Naive thymus-derived CD4-positive, alpha-beta T cell (primary cell): ENCODE measurements at regions of chr17 and their contacts with region 1.

Region 1: GRCh38 chr17:64145757-64146417 is 15.9 kb upstream of the ERN1 start:
- DNase-seq: peak; percentile 85 to 99 (median 96)
- ATAC-seq: peak; percentile 98
- H3K4me3 ChIP-seq: peak overlapping the region; percentile 72
- H3K4me3 Mint-ChIP-seq: no peak overlapping the region
- H3K27ac ChIP-seq: peak overlapping the region; percentile 91
- H3K27ac Mint-ChIP-seq: no peak overlapping the region
- H3K4me1 ChIP-seq: peaks cover 11 to 12% of the 10 kb centered on the region in 2 donors
- H3K4me1 Mint-ChIP-seq: peaks cover 11 to 34% (median 27%) of the 10 kb centered on the region in 7 donors
- H3K27me3 ChIP-seq: no peaks in the 10 kb centered on the region
- H3K27me3 Mint-ChIP-seq: no peaks in the 10 kb centered on the region

Region 2: DNA sequence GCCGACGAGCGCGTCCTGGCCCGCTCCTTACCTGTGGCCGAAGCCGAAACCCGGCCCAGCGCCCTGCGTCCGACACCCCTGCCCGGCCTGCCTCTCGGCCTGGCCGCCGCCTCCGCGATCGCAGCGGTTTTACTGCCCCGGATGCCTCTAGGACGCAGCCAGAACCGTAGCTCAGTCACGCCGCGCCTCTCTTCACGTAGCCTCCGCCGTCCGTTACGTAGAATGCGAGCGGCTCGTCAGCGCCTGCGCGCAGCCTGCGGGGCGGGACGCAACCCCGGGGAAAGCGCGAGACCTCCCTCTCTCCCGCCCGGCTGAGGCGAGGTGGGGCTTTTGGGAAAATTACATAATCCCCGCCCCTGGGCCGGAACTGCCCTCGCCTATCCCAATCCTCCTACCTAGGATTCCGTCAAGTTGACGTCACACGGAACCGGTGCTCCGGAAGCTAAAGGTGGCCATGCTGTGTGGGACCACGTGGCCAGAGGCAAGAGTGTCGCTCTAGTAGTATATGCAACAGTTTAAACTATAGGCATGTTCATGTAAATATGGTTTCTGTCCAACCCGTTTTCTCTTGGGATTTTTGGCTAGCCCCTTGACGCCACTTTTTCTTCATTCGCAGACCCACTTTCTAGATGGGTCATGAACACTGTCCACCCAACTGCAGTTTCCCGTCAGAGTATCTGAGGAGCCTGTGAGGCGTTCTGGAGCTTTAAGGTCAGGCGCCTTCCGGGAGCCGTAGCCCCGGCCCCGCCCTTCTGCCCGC is 372.3 kb before region 1 on chr17 and contains the start of gene CCDC47:
- CTCF ChIA-PET with region 1: no interaction called
- POLR2A ChIA-PET with region 1: no interaction called
- intact Hi-C with region 1: loop called in 1 of 2 experiments (anchors 1 kb)
- DNase-seq: peak; percentile 92 to 99 (median 99)
- ATAC-seq: peak; percentile 88
- H3K4me3 ChIP-seq: peak within 1 kb of the TSS; percentile 85
- H3K4me3 Mint-ChIP-seq: peak within 1 kb of the TSS; percentile 91 to 99 (median 98)
- H3K27ac ChIP-seq: peak within 1 kb of the TSS; percentile 100
- H3K27ac Mint-ChIP-seq: peak within 1 kb of the TSS; percentile 97 to 100 (median 99)
- H3K4me1 ChIP-seq: peaks cover 21 to 46% of the 10 kb centered on the region in 2 donors
- H3K4me1 Mint-ChIP-seq: peaks cover 31 to 84% (median 62%) of the 10 kb centered on the region in 7 donors
- H3K27me3 ChIP-seq: no peaks in the 10 kb centered on the region
- H3K27me3 Mint-ChIP-seq: peaks cover 0 to 7% (median 0%) of the 10 kb centered on the region in 5 donors
- total RNA-seq, gene CCDC47: 31.8 to 62.9 (median 34.7) TPM

Region 3: GRCh38 chr17:64020056-64020766 is 125.7 kb before region 1 on chr17 and contains the start of gene ICAM2:
- CTCF ChIA-PET with region 1: interaction called, 6 read pairs
- POLR2A ChIA-PET with region 1: interaction called, 84 read pairs
- intact Hi-C with region 1: loop called in 1 of 2 experiments (anchors 1 kb)
- DNase-seq: peak; percentile 73 to 97 (median 96)
- ATAC-seq: peak; percentile 90
- H3K4me3 ChIP-seq: peak within 1 kb of the TSS; percentile 94
- H3K4me3 Mint-ChIP-seq: peak within 1 kb of the TSS; percentile 91 to 100 (median 98)
- H3K27ac ChIP-seq: peak within 1 kb of the TSS; percentile 96
- H3K27ac Mint-ChIP-seq: peak within 1 kb of the TSS; percentile 91 to 100 (median 100)
- H3K4me1 ChIP-seq: peaks cover 57 to 68% of the 10 kb centered on the region in 2 donors
- H3K4me1 Mint-ChIP-seq: peaks cover 45 to 79% (median 71%) of the 10 kb centered on the region in 7 donors
- H3K27me3 ChIP-seq: no peaks in the 10 kb centered on the region
- H3K27me3 Mint-ChIP-seq: peaks cover 0 to 2% (median 0%) of the 10 kb centered on the region in 5 donors
- total RNA-seq, gene ICAM2: 60.9 to 132 (median 92.3) TPM

Region 4: GRCh38 chr17:64063766-64064224 is 82.1 kb before region 1 on chr17:
- CTCF ChIA-PET with region 1: interaction called, 4 read pairs
- POLR2A ChIA-PET with region 1: interaction called, 57 read pairs
- intact Hi-C with region 1: no loop called
- DNase-seq: peak; percentile 36 to 71 (median 56)
- ATAC-seq: peak; percentile 73
- H3K4me3 ChIP-seq: no peak overlapping the region
- H3K4me3 Mint-ChIP-seq: peak overlapping the region in 3 of 10 donors; percentile 33 to 64 (median 54)
- H3K27ac ChIP-seq: no peak overlapping the region
- H3K27ac Mint-ChIP-seq: peak overlapping the region in 5 of 9 donors; percentile 51 to 80 (median 69)
- H3K4me1 ChIP-seq: peaks cover 23 to 84% of the 10 kb centered on the region in 2 donors
- H3K4me1 Mint-ChIP-seq: peaks cover 40 to 88% (median 56%) of the 10 kb centered on the region in 7 donors
- H3K27me3 ChIP-seq: no peaks in the 10 kb centered on the region
- H3K27me3 Mint-ChIP-seq: no peaks in the 10 kb centered on the region

Region 5: GRCh38 chr17:64170286-64170685 is 24.4 kb after region 1 on chr17:
- CTCF ChIA-PET with region 1: no interaction called
- POLR2A ChIA-PET with region 1: interaction called, 13 read pairs
- intact Hi-C with region 1: no loop called
- DNase-seq: no peak
- ATAC-seq: no peak
- H3K4me3 ChIP-seq: no peak overlapping the region
- H3K4me3 Mint-ChIP-seq: no peak overlapping the region
- H3K27ac ChIP-seq: no peak overlapping the region
- H3K27ac Mint-ChIP-seq: no peak overlapping the region
- H3K4me1 ChIP-seq: no peaks in the 10 kb centered on the region
- H3K4me1 Mint-ChIP-seq: peaks cover 0 to 4% (median 0%) of the 10 kb centered on the region in 7 donors
- H3K27me3 ChIP-seq: no peaks in the 10 kb centered on the region
- H3K27me3 Mint-ChIP-seq: no peaks in the 10 kb centered on the region

Region 6: DNA sequence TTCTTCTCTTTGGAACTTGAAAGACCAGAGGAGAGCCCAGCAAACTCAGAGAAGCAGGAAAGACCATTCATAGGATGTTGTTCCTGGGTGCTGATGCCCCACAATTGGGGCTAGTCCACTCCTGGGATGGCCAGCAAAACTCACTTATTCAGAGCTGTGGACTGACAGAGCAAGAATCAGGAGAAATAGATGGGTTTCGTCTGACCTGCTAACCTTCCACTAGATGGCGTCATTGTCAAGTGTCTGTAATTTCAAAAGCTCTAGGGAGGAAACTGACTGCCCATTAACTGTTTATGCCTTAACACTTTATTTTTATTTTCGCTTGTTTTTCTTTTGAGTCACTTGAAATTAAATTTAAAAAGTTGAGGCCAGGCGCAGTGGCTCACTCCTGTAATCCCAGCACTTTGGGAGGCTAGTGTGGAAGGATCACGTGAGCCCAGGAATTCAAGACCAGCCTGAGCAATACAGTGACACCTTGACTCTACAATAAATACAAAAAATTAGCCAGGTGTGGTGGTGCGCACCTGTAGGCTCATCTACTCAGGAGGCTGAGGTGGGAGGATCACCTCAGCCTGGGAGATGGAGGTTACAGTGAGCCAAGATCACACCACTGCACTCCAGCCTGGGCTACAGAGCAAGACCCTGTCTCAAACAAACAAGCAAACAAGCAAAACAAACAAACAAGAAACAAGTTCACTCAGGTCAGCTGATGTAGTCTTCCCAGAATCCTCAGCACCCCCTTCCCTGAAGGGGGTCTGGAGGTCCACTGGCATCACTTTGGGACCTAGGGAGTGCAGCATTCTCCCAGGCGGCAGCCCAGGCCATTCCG is 274.5 kb after region 1 on chr17:
- CTCF ChIA-PET with region 1: no interaction called
- POLR2A ChIA-PET with region 1: interaction called, 4 read pairs
- intact Hi-C with region 1: loop called in 1 of 2 experiments (anchors 10 kb)
- DNase-seq: peak in 7 of 9 donors; percentile 54 to 83 (median 75)
- ATAC-seq: peak; percentile 88
- H3K4me3 ChIP-seq: no peak overlapping the region
- H3K4me3 Mint-ChIP-seq: no peak overlapping the region
- H3K27ac ChIP-seq: no peak overlapping the region
- H3K27ac Mint-ChIP-seq: no peak overlapping the region
- H3K4me1 ChIP-seq: no peaks in the 10 kb centered on the region
- H3K4me1 Mint-ChIP-seq: peaks cover 0 to 11% (median 0%) of the 10 kb centered on the region in 7 donors
- H3K27me3 ChIP-seq: peaks cover 0 to 3% of the 10 kb centered on the region in 2 donors
- H3K27me3 Mint-ChIP-seq: peaks cover 0 to 5% (median 0%) of the 10 kb centered on the region in 5 donors